HEK293T (cell line): ENCODE measurements at regions of chr7 and their contacts with region 1.

Region 1: GRCh38 chr7:27179503-27180430 is 5.3 kb downstream of the HOXA11 start:
- DNase-seq: peak; percentile 71

Region 2: GRCh38 chr7:27143023-27143949 is 36.5 kb before region 1 on chr7 and contains the start of gene HOXA5:
- CTCF ChIA-PET with region 1: interaction called, 13 read pairs
- POLR2A ChIA-PET with region 1: interaction called, 367 read pairs
- DNase-seq: peak; percentile 79

Region 3: DNA sequence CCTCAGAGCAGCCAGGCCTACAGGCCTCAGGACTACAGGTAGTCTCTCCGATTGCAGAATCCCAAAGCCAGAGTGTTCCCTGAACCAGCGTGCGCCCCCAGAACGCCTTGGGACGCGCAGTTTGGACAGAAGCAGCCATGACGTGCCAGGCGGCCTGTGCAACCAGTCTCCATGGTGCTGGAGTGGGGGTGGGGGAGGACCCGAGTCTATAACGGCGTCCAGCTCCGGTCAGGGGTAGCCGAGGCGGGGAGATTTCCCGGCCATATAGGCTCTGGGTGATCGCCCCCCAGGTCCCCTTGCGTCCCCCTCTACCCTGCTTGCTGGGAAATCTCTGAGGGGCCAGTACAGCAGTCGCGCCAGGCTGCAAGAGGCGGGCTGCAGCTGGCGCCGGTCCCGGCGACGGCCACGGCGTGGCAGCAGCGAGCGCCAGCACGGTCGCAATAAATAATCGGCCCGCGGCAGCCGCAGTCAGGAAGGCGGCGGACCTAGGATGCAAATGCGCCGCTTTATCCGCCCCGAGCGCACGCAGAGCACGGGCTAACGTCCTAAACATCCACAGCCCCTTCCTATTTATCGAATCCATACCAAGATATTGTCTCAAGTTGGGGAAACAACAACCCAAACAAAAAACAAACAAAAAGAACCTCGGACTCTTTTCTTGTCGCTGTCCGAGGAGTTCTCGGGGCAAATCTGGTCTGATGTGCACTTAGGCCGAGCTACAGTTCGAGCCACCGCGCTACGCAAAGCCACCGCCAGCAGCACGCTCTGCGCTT is 29.0 kb before region 1 on chr7:
- CTCF ChIA-PET with region 1: interaction called, 4 read pairs
- POLR2A ChIA-PET with region 1: interaction called, 367 read pairs
- DNase-seq: no peak

Region 4: GRCh38 chr7:27160546-27161213 is 19.1 kb before region 1 on chr7:
- CTCF ChIA-PET with region 1: interaction called, 11 read pairs
- POLR2A ChIA-PET with region 1: interaction called, 367 read pairs
- DNase-seq: peak; percentile 61

Region 5: DNA sequence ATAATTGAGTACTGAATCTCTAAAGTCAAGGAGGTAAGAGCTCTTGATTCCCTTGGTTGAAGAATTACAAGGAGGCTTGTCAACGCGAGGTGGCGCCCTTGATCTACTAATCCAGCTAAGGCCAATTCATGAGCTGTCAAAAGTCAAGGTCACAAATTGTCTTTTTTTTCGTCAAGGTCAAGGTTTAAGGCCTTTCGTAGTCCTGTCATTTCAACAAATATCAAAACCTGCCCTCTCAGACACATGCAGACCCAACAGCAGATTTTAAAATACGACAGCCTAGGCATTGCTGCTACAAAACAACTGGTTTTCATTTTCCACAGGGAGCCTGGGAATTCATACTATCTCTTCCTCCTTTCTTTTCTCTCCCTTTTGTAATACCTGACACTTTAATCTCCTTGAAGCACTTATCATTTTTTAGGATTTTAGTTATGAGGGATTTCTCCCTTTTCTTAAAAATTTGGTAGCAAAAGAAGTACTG is 16.6 kb after region 1 on chr7:
- CTCF ChIA-PET with region 1: interaction called, 8 read pairs
- POLR2A ChIA-PET with region 1: interaction called, 215 read pairs
- DNase-seq: no peak

Region 6: GRCh38 chr7:27377988-27378387 is 198.2 kb after region 1 on chr7:
- CTCF ChIA-PET with region 1: no interaction called
- POLR2A ChIA-PET with region 1: no interaction called
- DNase-seq: no peak